ENCODE measurements at regions of chr3 and their contacts with region 1.

Region 1: DNA sequence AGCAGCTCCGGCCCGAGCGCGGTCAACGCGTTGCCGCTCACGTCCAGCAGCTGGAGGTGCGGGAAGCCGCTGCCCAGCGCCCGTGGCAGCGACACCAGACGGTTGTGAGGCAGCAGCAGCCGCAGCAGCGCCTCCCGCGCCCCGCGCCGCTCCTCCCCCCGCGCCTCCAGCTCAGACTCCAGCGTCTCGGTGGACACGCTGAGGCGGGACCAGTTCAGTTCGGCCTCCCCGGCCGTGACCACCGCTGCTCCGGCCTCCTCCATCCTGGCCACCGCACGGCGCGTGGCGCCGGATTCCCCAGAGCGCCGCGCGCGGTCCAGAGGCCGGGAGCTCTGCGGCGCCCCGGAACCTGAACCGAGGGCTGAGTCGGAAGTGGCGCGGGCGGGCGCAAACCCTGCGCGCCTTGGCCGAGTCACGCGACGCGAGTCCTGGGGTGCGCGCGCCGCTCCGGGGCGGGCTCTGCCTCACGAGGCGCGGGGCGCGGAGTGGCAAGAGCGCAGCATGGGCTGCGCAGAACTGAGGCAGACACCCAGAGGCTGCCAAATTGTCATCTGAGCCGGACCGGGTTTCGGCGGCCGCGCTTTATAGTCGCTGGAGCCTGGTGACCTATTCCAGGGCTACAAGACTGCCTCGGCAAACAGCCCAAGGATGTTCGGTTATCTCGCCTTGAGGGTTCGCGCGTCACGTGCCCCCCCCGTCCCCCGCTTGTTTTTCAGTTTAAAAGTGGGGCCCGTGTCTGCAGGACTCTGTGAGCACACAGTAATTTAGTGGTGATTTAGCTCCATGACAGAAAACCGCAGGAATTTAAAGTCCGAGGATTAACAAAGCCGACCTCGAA is at the start of gene LRRC58:
- DNase-seq: peak; percentile 72 to 98 (median 84)

Region 2: DNA sequence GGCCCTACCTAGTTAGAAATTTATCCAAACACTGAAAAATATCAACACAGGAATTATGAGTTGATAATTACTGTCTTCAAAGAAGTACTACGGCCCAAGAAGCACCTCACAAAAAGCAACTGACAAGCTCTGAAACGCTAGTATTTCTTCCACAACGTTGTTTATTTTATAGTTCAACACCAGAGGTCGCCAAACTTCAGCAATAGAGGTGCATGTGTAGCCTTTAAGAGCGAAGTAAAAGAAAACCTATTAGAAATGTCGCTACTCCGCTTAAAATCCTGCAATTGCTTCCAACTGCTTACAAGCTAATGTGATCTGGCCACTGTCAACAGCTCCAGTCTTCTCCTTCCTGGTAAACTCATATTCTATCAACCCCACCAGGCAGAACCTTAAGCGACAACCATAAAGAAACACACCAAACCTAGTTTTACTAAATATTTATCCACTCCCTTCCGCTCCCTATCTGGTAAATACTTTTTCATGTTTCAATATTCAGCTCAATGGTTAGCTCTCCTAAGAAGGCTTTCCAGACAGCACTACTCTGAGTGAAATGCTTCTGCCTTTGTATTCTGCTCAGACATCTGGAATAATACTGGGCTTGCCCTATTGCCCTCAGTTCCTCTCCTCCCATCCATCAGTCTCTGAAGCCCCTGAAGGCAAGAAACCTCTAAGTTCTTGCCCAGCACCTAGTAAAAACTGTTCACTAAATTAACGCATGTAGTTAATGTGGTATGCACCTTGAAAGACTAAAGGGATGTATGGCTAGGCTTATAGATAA is 457.1 kb before region 1 on chr3:
- intact Hi-C with region 1: no loop called
- DNase-seq: peak in 3 of 10 donors; percentile 10 to 40 (median 13)

Region 3: DNA sequence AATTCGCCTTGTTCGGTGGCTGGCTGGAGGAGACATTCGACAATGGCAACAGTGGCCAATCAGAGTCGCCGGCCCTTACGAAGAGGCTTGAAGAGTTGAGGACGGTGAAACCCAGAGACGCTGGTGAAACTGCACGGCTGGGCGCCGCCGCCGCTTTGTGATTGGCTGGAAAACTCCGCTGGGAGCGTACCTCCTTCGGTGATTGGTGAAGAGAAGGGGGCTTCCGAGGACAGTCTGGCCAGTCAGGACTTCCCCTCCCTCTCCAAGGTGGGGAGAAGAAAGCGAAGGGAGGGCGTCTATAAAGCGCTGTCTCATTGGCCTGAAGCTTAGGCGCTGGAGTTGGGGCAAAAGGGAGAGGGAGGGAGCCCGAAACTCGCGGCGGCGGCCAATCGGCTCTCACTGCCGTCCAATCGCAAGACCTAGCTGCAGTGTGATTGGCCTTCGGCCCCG is 254.4 kb before region 1 on chr3:
- intact Hi-C with region 1: loop called (anchors 5 kb)
- DNase-seq: peak; percentile 95 to 100 (median 100)

Region 4: DNA sequence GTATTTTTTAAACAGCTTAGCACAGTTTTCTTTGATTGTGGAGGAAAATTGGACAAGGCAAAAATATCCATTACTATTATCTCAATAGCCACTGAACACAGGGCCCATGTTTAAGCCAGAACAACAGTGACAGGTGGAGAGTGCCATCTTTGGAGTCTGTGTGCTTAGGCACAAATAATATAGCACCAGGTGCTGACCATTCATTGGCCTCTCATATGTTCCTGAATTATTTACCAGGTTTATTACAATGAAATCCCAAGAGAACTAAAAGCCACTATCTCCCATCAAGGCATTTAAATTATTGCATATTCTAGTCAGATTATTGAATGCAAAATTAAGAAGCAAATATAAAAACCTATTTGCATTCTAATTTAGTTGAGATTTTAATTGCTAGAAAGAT is 103.8 kb before region 1 on chr3:
- intact Hi-C with region 1: loop called (anchors 10 kb)
- DNase-seq: no peak

Region 5: DNA sequence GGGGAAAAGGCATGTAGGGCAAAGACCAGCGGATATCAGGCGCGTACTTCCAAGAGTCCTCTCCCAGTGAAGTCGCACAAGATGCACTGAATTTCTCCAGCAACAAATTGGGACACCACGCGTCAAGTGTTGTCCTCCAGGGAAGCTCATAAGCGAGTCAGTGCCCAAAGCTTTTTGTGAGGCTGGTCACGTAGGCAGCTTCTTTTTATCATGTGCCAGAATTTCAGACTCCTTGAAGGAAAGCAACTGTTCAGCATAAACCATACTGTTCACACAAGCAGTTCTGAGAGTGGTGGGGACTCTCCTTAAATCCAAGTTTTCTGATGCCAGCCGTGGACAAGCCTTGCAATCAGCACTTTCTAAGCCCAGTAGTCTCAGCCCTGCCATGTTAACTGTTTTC is 111.7 kb after region 1 on chr3:
- intact Hi-C with region 1: no loop called
- DNase-seq: peak in 6 of 10 donors; percentile 32 to 85 (median 56)

Region 6: GRCh38 chr3:120558771-120559241 is 209.6 kb after region 1 on chr3:
- intact Hi-C with region 1: loop called (anchors 5 kb)
- DNase-seq: peak; percentile 72 to 97 (median 86)

Measured in posterior cingulate gyrus (tissue), 11 donors.